Activated CD4-positive, alpha-beta memory T cell treated with anti-CD3 and anti-CD28 coated beads, Interleukin-2, amount 10 ng/mL, durations not matched to agents 7 days and 5 days (primary cell): ENCODE measurements at regions of chr12 and their contacts with region 1.

Region 1: GRCh38 chr12:26884765-26885576 is 52.0 kb upstream of the ITPR2 start:
- DNase-seq: peak; percentile 84
- H3K4me3 Mint-ChIP-seq: no peak overlapping the region
- H3K27ac Mint-ChIP-seq: no peak overlapping the region
- H3K4me1 Mint-ChIP-seq: peaks cover 12% of the 10 kb centered on the region
- H3K27me3 Mint-ChIP-seq: peaks cover 8% of the 10 kb centered on the region

Region 2: DNA sequence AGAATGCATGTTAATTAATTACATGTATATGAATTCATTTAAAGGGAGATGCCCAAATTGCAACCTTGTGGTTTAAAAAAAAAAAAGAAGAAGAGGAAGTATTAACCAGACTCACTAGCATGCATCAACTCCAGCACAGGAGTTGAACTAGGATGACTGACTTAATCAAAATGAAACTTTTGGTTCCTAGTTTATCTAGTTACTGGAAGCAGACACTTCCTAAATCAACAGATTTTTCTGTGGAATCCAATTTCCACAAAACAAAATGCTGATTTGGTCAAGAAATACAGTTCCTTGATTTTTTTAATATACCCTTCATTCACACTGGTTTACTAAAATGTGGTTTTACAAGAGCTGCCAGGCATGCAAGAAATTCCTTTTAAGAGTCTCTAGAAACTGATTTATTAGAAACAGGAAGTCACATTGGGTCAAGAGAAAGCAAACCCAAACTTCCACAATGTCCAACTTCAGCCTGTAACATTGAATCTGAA is 93.6 kb before region 1 on chr12:
- CTCF ChIA-PET with region 1: no interaction called
- POLR2A ChIA-PET with region 1: no interaction called
- DNase-seq: no peak
- H3K4me3 Mint-ChIP-seq: no peak overlapping the region
- H3K27ac Mint-ChIP-seq: no peak overlapping the region
- H3K4me1 Mint-ChIP-seq: peaks cover 18% of the 10 kb centered on the region
- H3K27me3 Mint-ChIP-seq: no peaks in the 10 kb centered on the region

Region 3: DNA sequence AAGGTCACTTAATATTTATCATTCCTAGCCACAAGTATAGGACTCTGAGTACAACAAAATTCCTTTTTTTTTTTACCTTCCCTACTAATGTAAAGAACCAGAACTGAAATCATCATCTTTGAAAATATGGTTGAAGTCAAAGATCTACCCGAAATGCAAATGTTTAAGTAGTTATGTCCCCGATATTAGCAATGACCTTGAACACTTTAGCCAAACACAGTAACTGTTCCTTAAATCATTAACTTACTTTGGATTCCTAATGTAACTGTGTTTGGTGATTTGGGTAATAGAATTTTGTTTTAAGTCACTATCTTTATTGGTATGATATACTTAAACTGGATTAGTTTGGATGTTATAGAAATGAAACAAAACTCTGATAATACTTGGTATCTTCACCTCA is 66.3 kb before region 1 on chr12:
- CTCF ChIA-PET with region 1: no interaction called
- POLR2A ChIA-PET with region 1: no interaction called
- DNase-seq: no peak
- H3K4me3 Mint-ChIP-seq: no peak overlapping the region
- H3K27ac Mint-ChIP-seq: no peak overlapping the region
- H3K4me1 Mint-ChIP-seq: no peaks in the 10 kb centered on the region
- H3K27me3 Mint-ChIP-seq: no peaks in the 10 kb centered on the region

Region 4: GRCh38 chr12:26845057-26845666 is 39.8 kb before region 1 on chr12:
- CTCF ChIA-PET with region 1: interaction called, 12 read pairs
- POLR2A ChIA-PET with region 1: no interaction called
- DNase-seq: no peak
- H3K4me3 Mint-ChIP-seq: no peak overlapping the region
- H3K27ac Mint-ChIP-seq: no peak overlapping the region
- H3K4me1 Mint-ChIP-seq: peaks cover 7% of the 10 kb centered on the region
- H3K27me3 Mint-ChIP-seq: peaks cover 18% of the 10 kb centered on the region

Region 5: DNA sequence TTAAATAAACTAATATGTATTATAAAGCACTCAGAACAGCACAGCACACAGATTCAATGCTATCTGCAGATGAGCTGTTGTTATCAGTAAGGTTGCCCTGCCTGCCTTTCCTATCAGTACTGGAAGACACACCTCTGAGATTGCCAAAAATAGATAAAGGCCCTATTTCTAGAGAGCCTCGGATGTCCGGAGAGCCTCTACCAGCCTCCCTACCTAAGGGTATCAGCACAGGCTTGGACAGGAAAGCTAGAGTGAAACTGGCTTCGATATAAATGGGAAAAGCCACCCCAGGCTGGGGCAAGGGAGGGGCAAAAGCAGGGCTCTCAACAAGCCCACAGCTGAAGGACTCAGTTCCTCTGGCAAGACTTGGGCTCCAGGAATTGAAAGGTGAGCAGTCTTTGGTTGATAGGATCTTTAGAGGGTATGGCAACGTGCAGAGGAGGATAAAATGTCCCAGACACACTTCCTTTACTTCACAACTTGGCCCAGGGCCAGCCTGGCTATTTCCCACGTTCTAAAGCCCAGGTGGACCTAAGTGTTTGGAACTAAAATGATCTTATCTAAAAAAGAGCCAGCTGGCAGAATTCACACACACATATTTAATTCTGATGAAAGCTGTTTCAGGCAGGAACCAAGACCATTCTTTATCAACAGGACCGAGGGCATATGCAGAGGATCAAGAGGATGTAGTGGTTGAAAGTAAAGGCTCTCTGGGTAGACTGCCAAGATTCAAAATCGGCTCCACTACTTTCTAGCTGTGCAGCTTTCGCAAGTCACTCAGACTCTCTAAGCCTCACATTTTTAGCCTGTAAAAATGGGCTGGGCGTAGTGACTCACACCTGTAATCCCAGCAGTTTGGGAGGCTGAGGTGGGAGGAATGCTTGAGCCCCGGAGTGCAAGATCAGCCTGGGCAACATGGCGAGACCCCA is 14.2 kb before region 1 on chr12:
- CTCF ChIA-PET with region 1: interaction called, 22 read pairs
- POLR2A ChIA-PET with region 1: interaction called, 3 read pairs
- DNase-seq: no peak
- H3K4me3 Mint-ChIP-seq: no peak overlapping the region
- H3K27ac Mint-ChIP-seq: no peak overlapping the region
- H3K4me1 Mint-ChIP-seq: peaks cover 20% of the 10 kb centered on the region
- H3K27me3 Mint-ChIP-seq: peaks cover 10% of the 10 kb centered on the region

Region 6: GRCh38 chr12:26906024-26906423 is 21.1 kb after region 1 on chr12:
- CTCF ChIA-PET with region 1: interaction called, 11 read pairs
- POLR2A ChIA-PET with region 1: no interaction called
- DNase-seq: no peak
- H3K4me3 Mint-ChIP-seq: no peak overlapping the region
- H3K27ac Mint-ChIP-seq: no peak overlapping the region
- H3K4me1 Mint-ChIP-seq: peaks cover 3% of the 10 kb centered on the region
- H3K27me3 Mint-ChIP-seq: no peaks in the 10 kb centered on the region